Activated CD4-positive, alpha-beta T cell treated with anti-CD3 and anti-CD28 coated beads for 36 hours (primary cell): ENCODE measurements at regions of chr16 and their contacts with region 1.

Region 1: DNA sequence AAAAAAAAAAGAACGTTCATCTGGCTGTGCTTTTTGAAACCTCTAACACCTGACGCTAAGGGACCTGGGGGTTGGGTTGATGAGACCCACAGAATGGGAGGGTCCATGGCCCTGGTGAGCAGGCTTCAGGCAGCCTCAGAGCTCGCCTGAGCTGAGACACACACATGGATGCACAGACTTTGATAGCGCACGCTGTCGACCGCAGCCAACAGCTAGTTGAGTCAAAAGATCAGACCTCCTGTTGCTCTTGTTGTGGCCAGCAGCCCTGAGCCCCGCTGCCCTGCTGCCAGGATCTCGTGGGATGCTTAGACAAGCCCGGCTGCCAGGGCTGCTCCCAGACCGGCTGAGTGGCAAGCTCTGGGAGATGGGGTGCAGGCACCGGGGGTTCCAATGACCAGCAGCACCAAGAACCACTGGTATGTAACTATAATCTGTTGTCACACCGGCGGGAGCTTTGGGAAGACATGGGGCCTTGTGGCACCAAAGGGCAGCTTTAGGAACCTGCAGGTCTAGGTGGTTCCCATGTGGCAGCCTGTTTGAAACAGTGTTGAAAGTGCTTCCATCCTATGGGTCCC is 20.0 kb upstream of the MEAK7 start:
- DNase-seq: peak; percentile 10
- ATAC-seq: no peak
- H3K4me3 Mint-ChIP-seq: no peak overlapping the region
- H3K27ac Mint-ChIP-seq: no peak overlapping the region
- H3K4me1 Mint-ChIP-seq: peaks cover 13% of the 10 kb centered on the region
- H3K27me3 Mint-ChIP-seq: no peaks in the 10 kb centered on the region

Region 2: DNA sequence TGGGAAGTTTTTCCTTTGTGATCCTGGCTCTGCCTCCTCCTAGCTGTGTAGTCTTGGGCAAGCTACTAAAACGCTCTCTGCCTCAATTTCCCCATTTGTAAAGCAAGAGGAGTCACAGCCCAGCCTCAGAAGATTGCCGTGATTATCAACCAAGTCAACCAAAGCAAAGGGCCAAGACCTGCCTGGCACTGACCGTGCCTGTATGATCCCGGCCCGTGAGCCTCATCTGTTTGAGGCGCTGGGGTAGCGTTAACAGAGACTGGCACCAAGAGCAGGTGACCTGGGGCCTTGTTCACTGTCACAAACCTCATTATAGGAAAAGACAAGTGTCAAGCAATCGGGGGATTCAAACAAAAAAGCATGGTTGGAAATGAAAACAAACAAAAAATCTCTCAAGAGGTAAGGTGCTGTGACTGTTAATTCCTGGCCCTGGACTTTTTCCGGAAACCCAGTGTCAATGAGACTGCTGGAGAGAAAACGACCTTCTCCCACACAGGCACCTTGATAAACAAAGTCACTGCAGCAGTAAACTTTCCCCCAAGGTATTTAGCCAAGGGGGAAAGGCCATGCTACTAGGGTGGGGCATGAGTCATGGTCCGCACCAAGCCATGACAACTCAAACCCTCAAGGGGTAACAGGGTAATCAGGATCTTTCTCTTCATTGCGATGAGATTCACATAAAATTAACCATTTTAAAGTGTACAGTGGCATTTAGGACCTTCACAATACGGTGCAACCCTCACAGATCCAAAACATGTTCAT is 25.4 kb before region 1 on chr16:
- CTCF ChIA-PET with region 1: no interaction called
- POLR2A ChIA-PET with region 1: no interaction called
- intact Hi-C with region 1: no loop called
- DNase-seq: no peak
- ATAC-seq: no peak
- H3K4me3 Mint-ChIP-seq: no peak overlapping the region
- H3K27ac Mint-ChIP-seq: no peak overlapping the region
- H3K4me1 Mint-ChIP-seq: peaks cover 3% of the 10 kb centered on the region
- H3K27me3 Mint-ChIP-seq: no peaks in the 10 kb centered on the region

Region 3: DNA sequence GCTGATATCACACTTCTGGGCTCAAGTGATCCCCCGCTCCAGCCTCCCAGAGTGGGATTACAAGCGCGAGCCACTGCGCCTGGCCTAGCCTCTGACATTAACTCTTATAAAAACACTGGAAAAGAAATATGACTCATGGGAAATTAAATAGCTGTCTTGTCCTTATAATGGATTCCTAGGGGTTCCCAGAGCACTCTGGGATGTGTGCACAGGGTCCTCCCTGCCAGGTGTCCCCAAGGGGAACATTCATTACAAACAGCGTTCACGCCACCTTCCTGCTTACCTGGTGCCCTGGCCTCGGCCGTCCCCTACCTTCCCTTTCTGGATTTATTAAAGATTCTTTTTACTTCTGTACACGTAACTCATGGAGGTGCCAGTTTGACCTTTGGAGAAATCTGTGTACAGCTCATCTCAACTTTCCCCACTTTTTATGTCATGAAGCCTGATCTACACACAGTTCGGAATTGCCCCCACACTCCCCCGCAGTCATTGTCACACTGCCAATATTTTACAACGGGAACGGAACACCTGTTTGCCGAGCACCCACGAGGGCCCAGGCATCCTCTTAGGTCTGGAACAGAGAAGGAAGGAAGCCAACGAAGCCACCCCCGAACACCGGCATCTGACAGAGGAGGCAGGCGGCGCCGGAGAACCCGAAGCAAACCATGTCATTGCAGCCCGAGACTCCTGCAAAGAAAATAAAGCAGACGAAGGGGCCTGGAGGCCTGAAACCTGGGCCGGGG is 19.8 kb after region 1 on chr16:
- CTCF ChIA-PET with region 1: interaction called, 5 read pairs
- POLR2A ChIA-PET with region 1: no interaction called
- intact Hi-C with region 1: loop called in 1 of 2 experiments (anchors 2 kb)
- DNase-seq: peak; percentile 39
- ATAC-seq: peak; percentile 27
- H3K4me3 Mint-ChIP-seq: no peak overlapping the region
- H3K27ac Mint-ChIP-seq: peak overlapping the region; percentile 29
- H3K4me1 Mint-ChIP-seq: peaks cover 21% of the 10 kb centered on the region
- H3K27me3 Mint-ChIP-seq: peaks cover 1% of the 10 kb centered on the region